Activated T-helper 2 cell treated with anti-CD3 and anti-CD28 coated beads, Interferon-gamma antibody, Interleukin-2, Interleukin-4, amounts not matched to agents 10 μg/mL and 5 μg/mL and 100 μg/mL, durations not matched to agents 14 hours and 24 hours and 36 hours (primary cell): ENCODE measurements at regions of chr5 and their contacts with region 1.

Region 1: DNA sequence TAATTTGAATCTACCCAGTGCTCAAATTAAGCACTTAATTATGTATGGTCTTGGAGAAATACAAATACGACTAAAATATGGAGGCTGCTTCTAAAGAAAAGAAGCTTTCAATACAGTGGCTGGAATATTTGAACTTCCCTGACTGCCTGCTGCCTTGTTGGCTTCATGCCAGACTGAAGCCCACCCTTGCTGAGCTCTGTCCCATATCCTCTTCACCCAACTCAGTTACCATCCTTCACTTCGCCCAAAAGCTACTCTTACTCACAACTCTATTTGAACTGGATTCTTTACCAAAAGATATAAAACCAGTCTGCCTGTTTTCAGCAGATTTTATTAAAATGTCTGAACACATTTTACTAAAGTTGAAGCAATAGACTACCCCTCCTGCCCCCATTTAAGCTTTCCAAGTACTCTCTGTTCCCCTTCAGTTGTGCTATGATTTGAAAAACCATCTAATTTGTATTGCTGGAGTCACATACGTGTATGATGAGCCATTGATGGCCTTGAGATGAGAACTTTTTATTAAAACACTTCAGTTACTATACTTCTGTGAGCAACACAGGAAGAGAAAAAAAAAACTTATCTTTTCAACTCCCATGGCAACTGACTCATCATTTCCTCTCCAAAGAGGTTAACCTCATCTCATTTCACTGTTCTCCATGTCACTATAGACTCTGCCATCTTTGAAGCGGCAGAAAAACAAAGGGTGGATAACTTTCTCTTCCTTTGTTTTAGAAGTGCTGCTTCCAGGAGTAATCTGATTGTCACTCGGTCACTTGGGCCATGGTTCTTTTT is 104.1 kb upstream of the PCSK1 start:
- DNase-seq: peak; percentile 17
- H3K4me3 Mint-ChIP-seq: no peak overlapping the region
- H3K27ac Mint-ChIP-seq: peak overlapping the region; percentile 73
- H3K4me1 Mint-ChIP-seq: peaks cover 30% of the 10 kb centered on the region
- H3K27me3 Mint-ChIP-seq: peaks cover 12% of the 10 kb centered on the region

Region 2: GRCh38 chr5:95718203-95718602 is 819.0 kb before region 1 on chr5:
- intact Hi-C with region 1: loop called (anchors 5 kb)
- DNase-seq: peak; percentile 21
- H3K4me3 Mint-ChIP-seq: no peak overlapping the region
- H3K27ac Mint-ChIP-seq: no peak overlapping the region
- H3K4me1 Mint-ChIP-seq: peaks cover 19% of the 10 kb centered on the region
- H3K27me3 Mint-ChIP-seq: peaks cover 31% of the 10 kb centered on the region

Region 3: GRCh38 chr5:95858661-95859326 is 678.4 kb before region 1 on chr5:
- intact Hi-C with region 1: loop called (anchors 2 kb)
- DNase-seq: peak; percentile 84
- H3K4me3 Mint-ChIP-seq: peak overlapping the region; percentile 38
- H3K27ac Mint-ChIP-seq: peak overlapping the region; percentile 80
- H3K4me1 Mint-ChIP-seq: peaks cover 52% of the 10 kb centered on the region
- H3K27me3 Mint-ChIP-seq: no peaks in the 10 kb centered on the region

Region 4: GRCh38 chr5:96279801-96280542 is 257.2 kb before region 1 on chr5:
- intact Hi-C with region 1: loop called (anchors 5 kb)
- DNase-seq: no peak
- H3K4me3 Mint-ChIP-seq: no peak overlapping the region
- H3K27ac Mint-ChIP-seq: peak overlapping the region; percentile 47
- H3K4me1 Mint-ChIP-seq: peaks cover 25% of the 10 kb centered on the region
- H3K27me3 Mint-ChIP-seq: peaks cover 2% of the 10 kb centered on the region

Region 5: DNA sequence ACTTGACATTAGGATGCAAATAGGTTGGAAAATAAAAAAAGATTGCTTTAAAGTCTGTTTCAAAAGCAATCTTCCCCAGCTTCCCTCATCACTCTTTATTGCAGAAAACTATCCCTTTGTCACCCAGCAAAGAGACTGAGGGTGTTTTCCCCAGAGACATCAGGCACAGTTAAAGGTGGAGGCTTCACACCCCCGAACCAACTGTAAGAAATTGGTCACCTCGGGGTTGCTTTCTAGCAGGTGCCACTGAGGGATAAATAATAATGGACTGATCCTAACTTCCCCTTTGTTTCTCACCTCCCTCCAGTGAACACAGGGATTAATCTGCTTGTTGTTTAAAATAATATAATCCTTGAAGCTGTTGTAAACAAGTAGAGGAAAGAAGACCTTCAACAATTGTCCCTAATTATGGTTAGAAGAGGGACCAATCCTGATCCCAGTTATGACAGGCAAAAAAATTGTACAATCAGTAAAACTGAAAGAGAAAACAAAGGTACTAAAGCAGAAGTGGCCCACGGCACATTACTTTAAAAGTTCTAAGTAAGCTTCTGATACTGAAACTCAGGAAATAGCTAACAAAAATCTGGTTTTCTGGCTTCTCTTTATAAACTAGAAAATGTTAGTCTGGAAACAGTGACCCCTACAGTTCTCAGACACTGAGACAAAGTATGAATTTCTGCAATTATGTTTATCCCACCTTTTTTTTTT is 97.6 kb before region 1 on chr5:
- intact Hi-C with region 1: no loop called
- DNase-seq: no peak
- H3K4me3 Mint-ChIP-seq: no peak overlapping the region
- H3K27ac Mint-ChIP-seq: no peak overlapping the region
- H3K4me1 Mint-ChIP-seq: peaks cover 10% of the 10 kb centered on the region
- H3K27me3 Mint-ChIP-seq: peaks cover 30% of the 10 kb centered on the region

Region 6: GRCh38 chr5:96565582-96566265 is 28.5 kb after region 1 on chr5:
- intact Hi-C with region 1: loop called (anchors 2 kb)
- DNase-seq: no peak
- H3K4me3 Mint-ChIP-seq: no peak overlapping the region
- H3K27ac Mint-ChIP-seq: no peak overlapping the region
- H3K4me1 Mint-ChIP-seq: peaks cover 14% of the 10 kb centered on the region
- H3K27me3 Mint-ChIP-seq: peaks cover 28% of the 10 kb centered on the region

Region 7: DNA sequence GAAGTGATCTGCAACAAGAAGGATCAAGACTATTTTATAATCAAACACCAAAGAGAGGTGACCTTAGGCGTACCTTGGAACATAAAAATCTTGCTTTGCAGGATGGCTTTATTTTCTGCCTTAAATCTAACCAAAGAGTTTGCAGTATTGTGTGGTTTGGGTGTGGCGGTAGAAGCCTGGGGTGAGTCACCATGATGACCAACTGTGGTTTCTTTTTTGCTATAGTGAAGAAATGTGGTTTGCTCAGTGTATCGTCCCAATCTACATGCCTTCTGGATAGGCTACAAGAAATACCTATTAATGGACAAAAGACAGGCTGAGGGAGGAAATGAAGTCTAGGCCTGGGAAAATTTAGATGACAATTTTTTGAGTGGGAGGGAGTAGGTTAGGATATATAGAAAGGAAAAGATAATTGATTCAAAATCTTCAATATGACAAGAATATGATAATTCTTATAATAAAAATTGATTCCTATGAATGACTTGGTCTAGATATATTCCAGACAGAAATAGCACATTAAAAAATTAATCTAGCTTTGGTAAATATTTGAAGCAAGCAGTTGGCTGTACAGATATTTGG is 120.0 kb after region 1 on chr5:
- intact Hi-C with region 1: loop called (anchors 2 kb)
- DNase-seq: peak; percentile 58
- H3K4me3 Mint-ChIP-seq: no peak overlapping the region
- H3K27ac Mint-ChIP-seq: no peak overlapping the region
- H3K4me1 Mint-ChIP-seq: peaks cover 52% of the 10 kb centered on the region
- H3K27me3 Mint-ChIP-seq: peaks cover 53% of the 10 kb centered on the region

Region 8: GRCh38 chr5:97183100-97183929 is 646.1 kb after region 1 on chr5 and contains the start of gene RIOK2:
- intact Hi-C with region 1: loop called (anchors 2 kb)
- DNase-seq: peak; percentile 89
- H3K4me3 Mint-ChIP-seq: peak within 1 kb of the TSS; percentile 89
- H3K27ac Mint-ChIP-seq: peak within 1 kb of the TSS; percentile 100
- H3K4me1 Mint-ChIP-seq: peaks cover 24% of the 10 kb centered on the region
- H3K27me3 Mint-ChIP-seq: peaks cover 9% of the 10 kb centered on the region
- total RNA-seq, gene RIOK2: 28.1 and 30.5 TPM in 2 replicates